Activated CD4-positive, alpha-beta T cell treated with anti-CD3 and anti-CD28 coated beads for 36 hours (primary cell): ENCODE measurements at regions of chr4 and their contacts with region 1.

Region 1: DNA sequence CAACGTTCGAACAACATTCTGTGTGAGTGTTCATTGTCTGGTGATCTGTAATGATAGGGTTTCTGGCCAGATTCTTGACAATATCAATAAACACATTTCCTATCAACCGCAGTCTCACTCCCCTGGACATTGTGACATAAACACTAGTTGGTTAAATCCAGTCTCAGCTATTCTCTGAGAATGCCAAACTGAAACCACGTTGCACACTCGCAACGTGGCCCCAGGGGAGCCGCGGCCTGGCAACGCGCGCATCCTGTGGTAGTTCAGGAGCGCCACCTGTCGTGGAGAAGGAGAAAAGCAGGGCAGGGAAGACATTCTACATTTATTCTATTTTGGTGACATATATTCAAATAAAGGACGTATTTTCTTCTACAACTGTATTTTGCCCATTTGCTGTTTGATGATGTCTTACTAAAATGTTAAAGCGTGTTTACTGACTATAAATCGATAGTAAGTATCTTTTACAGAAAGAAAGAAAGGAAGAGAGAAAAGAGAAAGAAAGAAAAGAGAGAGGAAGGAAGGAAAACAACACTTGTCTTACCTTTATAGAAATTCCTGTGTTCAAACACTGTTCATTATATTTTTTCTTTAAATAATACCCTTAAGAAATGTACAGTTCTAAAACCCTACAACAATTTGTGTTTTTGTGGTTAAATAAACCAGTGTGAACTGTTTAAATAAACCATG is 738.3 kb upstream of the FRG1 start:
- DNase-seq: peak; percentile 70
- ATAC-seq: peak; percentile 66
- H3K4me3 Mint-ChIP-seq: no peak overlapping the region
- H3K27ac Mint-ChIP-seq: no peak overlapping the region
- H3K4me1 Mint-ChIP-seq: peaks cover 11% of the 10 kb centered on the region
- H3K27me3 Mint-ChIP-seq: peaks cover 3% of the 10 kb centered on the region

Region 2: DNA sequence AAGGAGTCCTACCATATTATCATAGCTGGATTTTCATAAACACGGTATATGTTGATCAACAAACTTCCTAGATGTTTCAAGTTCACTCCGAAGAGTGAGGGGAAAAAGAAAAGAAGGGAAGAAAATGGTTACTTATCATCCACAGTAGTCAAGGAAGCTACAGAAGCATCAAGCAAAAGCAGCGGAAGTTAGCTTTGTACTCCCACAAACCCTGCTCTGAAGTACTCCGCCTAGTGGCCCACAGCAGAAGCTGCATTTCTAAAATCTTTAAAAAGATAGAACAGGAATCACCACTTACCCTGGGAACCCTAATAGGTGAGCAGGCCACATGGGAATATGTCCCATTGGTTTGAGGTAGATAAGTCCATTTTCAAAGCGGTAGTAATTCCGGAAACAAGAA is 709.8 kb after region 1 on chr4:
- CTCF ChIA-PET with region 1: no interaction called
- POLR2A ChIA-PET with region 1: no interaction called
- intact Hi-C with region 1: loop called in 1 of 2 experiments (anchors 10 kb)
- DNase-seq: no peak
- ATAC-seq: no peak
- H3K4me3 Mint-ChIP-seq: no peak overlapping the region
- H3K27ac Mint-ChIP-seq: no peak overlapping the region
- H3K4me1 Mint-ChIP-seq: no peaks in the 10 kb centered on the region
- H3K27me3 Mint-ChIP-seq: no peaks in the 10 kb centered on the region